ENCODE measurements at regions of chr4 and their contacts with region 1.

Region 1: GRCh38 chr4:185210102-185210981 is 944 bp downstream of the SNX25 start:
- DNase-seq: peak; percentile 59 to 60
- H3K4me3 ChIP-seq: peak overlapping the region; percentile 30 to 74 (median 46)
- H3K27ac ChIP-seq: peak overlapping the region; percentile 79 to 83 (median 81)
- H3K4me1 ChIP-seq: peaks cover 20 to 26% of the 10 kb centered on the region in 2 donors
- H3K27me3 ChIP-seq: no peaks in the 10 kb centered on the region
- CTCF ChIP-seq: no peak
- POLR2A ChIP-seq: peak in 1 of 2 donors; percentile 57

Region 2: GRCh38 chr4:185282968-185283367 is 72.6 kb after region 1 on chr4:
- intact Hi-C with region 1: loop called (anchors 10 kb)
- DNase-seq: peak; percentile 49 to 59
- H3K4me3 ChIP-seq: no peak overlapping the region
- H3K27ac ChIP-seq: peak overlapping the region in 1 of 3 donors; percentile 54
- H3K4me1 ChIP-seq: peaks cover 21 to 37% of the 10 kb centered on the region in 2 donors
- H3K27me3 ChIP-seq: no peaks in the 10 kb centered on the region
- CTCF ChIP-seq: peak in 1 of 6 experiments; percentile 20
- POLR2A ChIP-seq: no peak

Region 3: GRCh38 chr4:185395956-185396723 is 185.8 kb after region 1 on chr4:
- intact Hi-C with region 1: loop called (anchors 5 kb)
- DNase-seq: peak; percentile 97 to 98
- H3K4me3 ChIP-seq: peak overlapping the region; percentile 52 to 93 (median 79)
- H3K27ac ChIP-seq: peak overlapping the region; percentile 98 to 99 (median 99)
- H3K4me1 ChIP-seq: peaks cover 12 to 15% of the 10 kb centered on the region in 2 donors
- H3K27me3 ChIP-seq: no peaks in the 10 kb centered on the region
- CTCF ChIP-seq: no peak
- POLR2A ChIP-seq: peak; percentile 60 to 86